PC-3 (cell line): ENCODE measurements at regions of chr2 and their contacts with region 1.

Region 1: DNA sequence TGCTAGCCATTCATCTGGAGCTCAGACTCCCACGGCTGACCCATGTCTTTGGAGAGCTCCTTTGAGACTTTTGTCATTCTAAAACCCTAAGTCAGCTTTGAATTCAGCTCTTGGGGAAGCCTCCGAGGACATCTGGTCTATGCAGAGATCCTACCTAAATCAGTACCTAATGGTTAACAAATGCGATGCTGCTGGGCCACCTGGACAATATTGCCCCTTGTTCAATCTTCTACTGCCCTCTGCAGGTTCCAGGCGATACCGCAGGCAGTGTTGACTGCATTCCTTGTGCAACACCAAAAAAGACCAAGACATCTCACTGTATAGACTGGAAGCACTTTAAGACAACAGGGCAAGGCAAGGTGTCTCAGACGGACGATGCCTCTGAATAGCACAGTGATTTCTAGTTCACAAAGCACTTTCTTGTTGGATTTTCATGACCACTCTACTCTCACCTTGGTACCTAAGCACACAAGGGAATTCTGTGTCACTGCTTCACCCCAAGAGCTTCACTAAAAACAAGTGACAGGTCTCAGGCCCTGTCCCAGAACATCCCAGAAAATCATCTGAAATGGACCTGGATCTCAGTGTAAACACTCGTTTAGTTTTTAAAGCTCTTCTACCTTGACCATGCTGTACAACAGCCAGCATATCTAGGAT is 80.9 kb downstream of the XDH start:
- DNase-seq: peak; percentile 94
- ATAC-seq: peak; percentile 62
- H3K4me3 ChIP-seq: no peak overlapping the region
- H3K27ac ChIP-seq: peak overlapping the region; percentile 95
- H3K4me1 ChIP-seq: peaks cover 44% of the 10 kb centered on the region
- H3K27me3 ChIP-seq: no peaks in the 10 kb centered on the region
- CTCF ChIP-seq: peak; percentile 97

Region 2: DNA sequence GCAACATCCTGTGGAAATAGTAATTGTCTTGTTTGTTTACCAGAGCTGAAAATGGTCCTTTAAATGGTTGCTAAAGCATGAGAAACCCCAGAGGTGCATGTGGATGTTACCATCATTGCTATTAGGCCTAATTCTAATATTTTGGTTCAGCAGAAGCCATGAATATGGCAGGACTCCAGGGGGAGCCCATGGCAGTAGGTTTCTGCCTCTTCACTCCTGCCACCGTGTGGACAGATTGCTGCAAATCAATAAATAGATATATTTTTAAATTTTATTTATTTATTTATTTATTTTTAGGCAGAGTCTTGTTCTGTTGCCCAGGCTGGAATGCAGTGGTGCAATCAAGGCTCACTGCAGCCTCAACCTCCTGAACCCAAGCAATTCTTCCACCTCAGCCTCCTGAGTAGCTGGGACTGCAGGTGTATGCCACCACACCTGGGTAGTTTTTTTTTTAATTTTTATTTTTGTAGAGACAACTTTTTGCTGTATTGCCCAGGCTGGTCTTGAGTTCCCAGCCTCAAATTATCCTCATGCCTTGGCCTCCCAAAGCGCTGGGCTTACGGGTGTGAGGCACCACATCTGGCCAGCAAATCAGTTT is 471.5 kb before region 1 on chr2:
- CTCF ChIA-PET with region 1: no interaction called
- POLR2A ChIA-PET with region 1: no interaction called
- intact Hi-C with region 1: loop called (anchors 1 kb)
- DNase-seq: peak; percentile 84
- ATAC-seq: peak; percentile 46
- H3K4me3 ChIP-seq: no peak overlapping the region
- H3K27ac ChIP-seq: no peak overlapping the region
- H3K4me1 ChIP-seq: no peaks in the 10 kb centered on the region
- H3K27me3 ChIP-seq: no peaks in the 10 kb centered on the region
- CTCF ChIP-seq: peak; percentile 69

Region 3: DNA sequence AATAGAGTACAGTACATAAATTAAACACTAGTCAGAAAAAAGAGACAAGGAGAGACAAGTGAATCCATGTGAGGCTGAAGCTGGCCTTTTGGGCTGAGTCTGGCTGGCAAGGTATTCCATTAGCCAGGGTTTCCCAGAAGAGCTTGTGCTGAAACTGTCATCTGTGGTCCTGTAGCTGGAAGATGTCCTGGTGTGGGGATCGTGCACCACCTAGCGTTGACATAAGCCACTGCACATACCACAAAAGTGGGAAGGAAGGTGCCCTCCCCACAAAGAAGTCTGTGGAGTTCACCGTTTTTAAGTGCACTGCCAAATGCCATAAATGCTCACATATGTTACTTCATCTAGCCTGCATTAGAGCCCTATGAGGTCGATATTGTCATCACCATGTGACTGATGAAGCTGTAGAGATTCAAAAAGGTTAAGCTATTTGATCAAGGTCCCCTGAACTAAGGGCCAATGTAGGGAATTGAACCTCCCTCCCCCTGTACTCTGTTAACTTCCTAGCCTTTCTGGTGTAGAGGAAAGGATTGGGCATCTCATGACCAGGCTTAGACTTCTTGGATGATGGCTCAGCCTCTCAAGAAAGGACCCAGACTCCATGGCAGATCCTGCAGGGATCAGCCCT is 163.5 kb before region 1 on chr2:
- CTCF ChIA-PET with region 1: no interaction called
- POLR2A ChIA-PET with region 1: no interaction called
- intact Hi-C with region 1: loop called (anchors 5 kb)
- DNase-seq: peak; percentile 72
- ATAC-seq: peak; percentile 90
- H3K4me3 ChIP-seq: no peak overlapping the region
- H3K27ac ChIP-seq: no peak overlapping the region
- H3K4me1 ChIP-seq: no peaks in the 10 kb centered on the region
- H3K27me3 ChIP-seq: peaks cover 7% of the 10 kb centered on the region; the same call in 1 of the 2 replicates
- CTCF ChIP-seq: peak; percentile 91

Region 4: DNA sequence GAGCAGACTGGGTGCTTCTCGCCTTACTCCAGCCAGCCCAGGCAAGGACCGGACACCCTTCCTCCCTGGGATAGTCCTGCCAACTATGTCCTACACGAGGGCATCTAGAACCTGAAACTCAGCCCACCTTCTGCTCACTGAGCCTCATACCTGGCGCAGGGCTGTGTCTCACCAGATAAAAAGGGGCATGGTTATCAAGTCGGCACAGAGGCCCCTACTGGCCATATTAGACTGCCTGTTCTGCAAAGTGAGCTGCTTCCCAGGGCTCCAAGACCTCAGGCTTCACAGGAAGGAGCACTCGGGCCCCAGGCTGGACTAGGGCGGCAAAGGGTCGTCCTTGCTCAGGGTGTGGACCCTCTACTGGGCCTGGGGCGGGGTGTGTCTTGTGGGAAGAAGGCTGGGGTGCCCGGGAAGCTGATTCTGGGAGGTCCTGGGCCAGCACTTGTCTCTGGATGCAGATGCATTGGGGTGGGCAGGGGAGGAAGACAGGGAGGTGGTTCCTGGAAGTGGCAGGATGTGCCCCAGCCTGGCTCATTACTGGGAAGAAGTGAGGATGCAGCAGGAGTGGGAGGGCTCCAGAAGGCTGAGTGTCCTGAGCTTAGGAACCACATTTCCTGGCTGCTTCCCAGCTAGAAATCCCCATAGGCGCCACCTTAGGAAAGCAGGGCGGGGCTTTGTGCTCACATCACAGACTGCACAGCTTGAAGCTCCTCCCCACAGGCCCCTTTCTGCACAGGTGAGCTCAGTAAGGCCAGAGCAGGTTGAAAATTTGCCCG is 80.1 kb before region 1 on chr2:
- CTCF ChIA-PET with region 1: no interaction called
- POLR2A ChIA-PET with region 1: no interaction called
- intact Hi-C with region 1: no loop called
- DNase-seq: peak; percentile 31
- ATAC-seq: no peak
- H3K4me3 ChIP-seq: no peak overlapping the region
- H3K27ac ChIP-seq: no peak overlapping the region
- H3K4me1 ChIP-seq: peaks cover 12% of the 10 kb centered on the region; the same call in 1 of the 2 replicates
- H3K27me3 ChIP-seq: no peaks in the 10 kb centered on the region
- CTCF ChIP-seq: no peak

Region 5: GRCh38 chr2:31270136-31270535 is 63.5 kb before region 1 on chr2:
- CTCF ChIA-PET with region 1: no interaction called
- POLR2A ChIA-PET with region 1: no interaction called
- intact Hi-C with region 1: loop called (anchors 2 kb)
- DNase-seq: peak; percentile 80
- ATAC-seq: peak; percentile 88
- H3K4me3 ChIP-seq: no peak overlapping the region
- H3K27ac ChIP-seq: no peak overlapping the region
- H3K4me1 ChIP-seq: peaks cover 18% of the 10 kb centered on the region
- H3K27me3 ChIP-seq: no peaks in the 10 kb centered on the region
- CTCF ChIP-seq: no peak

Region 6: DNA sequence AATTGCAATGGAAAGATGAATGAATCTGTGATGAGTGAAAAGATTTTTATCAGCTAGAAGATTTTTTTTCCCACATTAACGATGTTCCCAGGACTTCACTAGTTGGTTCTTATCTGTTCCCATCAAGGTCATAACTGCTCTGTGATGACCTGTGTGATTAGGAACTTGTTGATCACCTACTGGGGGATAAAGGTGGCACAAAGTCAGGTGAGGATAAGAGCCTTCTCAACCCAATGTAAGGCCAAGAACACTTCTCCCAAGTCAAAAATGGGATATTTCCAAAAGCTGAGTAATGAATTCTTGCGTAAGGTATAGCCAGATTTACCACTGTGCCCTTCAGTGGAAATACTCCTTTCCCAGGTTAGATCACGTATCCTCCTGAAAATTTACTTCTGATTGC is 52.5 kb before region 1 on chr2:
- CTCF ChIA-PET with region 1: no interaction called
- POLR2A ChIA-PET with region 1: no interaction called
- intact Hi-C with region 1: no loop called
- DNase-seq: peak; percentile 30
- ATAC-seq: no peak
- H3K4me3 ChIP-seq: no peak overlapping the region
- H3K27ac ChIP-seq: no peak overlapping the region
- H3K4me1 ChIP-seq: peaks cover 5% of the 10 kb centered on the region
- H3K27me3 ChIP-seq: no peaks in the 10 kb centered on the region
- CTCF ChIP-seq: no peak

Region 7: GRCh38 chr2:31434911-31435310 is 101.3 kb after region 1 on chr2:
- CTCF ChIA-PET with region 1: no interaction called
- POLR2A ChIA-PET with region 1: no interaction called
- intact Hi-C with region 1: loop called (anchors 2 kb)
- DNase-seq: peak; percentile 52
- ATAC-seq: peak; percentile 56
- H3K4me3 ChIP-seq: no peak overlapping the region
- H3K27ac ChIP-seq: no peak overlapping the region
- H3K4me1 ChIP-seq: peaks cover 12% of the 10 kb centered on the region
- H3K27me3 ChIP-seq: no peaks in the 10 kb centered on the region
- CTCF ChIP-seq: peak; percentile 73

Region 8: DNA sequence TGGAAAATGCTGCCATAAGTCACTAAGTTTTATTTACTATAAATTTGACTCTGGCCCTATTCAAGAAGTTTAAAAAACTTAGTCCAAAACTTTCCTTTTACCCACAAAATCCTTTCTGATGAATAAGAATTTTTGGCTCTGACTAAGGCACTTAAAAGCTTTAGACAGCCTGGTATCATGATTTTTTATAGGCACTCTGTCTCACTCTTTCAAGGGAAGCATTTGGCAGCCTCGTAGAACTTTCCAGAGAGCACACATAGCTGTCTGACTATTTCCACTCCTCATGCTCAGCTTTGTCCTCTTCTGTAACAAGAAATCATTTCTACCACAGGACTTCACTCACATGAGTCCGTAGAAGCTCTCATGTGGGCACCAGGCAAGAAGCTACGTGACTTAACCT is 113.2 kb after region 1 on chr2:
- CTCF ChIA-PET with region 1: no interaction called
- POLR2A ChIA-PET with region 1: no interaction called
- intact Hi-C with region 1: no loop called
- DNase-seq: peak; percentile 3
- ATAC-seq: no peak
- H3K4me3 ChIP-seq: no peak overlapping the region
- H3K27ac ChIP-seq: no peak overlapping the region
- H3K4me1 ChIP-seq: no peaks in the 10 kb centered on the region
- H3K27me3 ChIP-seq: no peaks in the 10 kb centered on the region
- CTCF ChIP-seq: no peak

Region 9: DNA sequence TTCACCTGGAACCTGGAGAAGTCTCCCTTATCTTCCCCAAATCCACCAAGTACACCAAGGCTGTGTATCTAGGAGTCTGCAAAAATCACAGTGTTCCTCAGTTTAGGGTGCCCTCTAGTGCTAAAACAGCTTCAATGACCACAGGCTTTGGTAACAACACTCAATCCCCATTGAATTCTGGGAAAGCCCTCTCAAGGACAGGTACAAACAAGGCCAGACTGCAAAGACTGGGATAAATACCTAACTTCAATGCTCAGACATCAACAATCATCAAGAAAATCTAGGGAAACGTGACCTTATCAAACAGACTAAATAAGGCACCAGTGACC is 396.1 kb after region 1 on chr2:
- CTCF ChIA-PET with region 1: no interaction called
- POLR2A ChIA-PET with region 1: no interaction called
- intact Hi-C with region 1: loop called (anchors 10 kb)
- DNase-seq: peak; percentile 74
- ATAC-seq: peak; percentile 82
- H3K4me3 ChIP-seq: no peak overlapping the region
- H3K27ac ChIP-seq: no peak overlapping the region
- H3K4me1 ChIP-seq: no peaks in the 10 kb centered on the region
- H3K27me3 ChIP-seq: no peaks in the 10 kb centered on the region
- CTCF ChIP-seq: peak; percentile 80